WTC11 (cell line): ENCODE measurements at regions of chr19 and their contacts with region 1.

Region 1: DNA sequence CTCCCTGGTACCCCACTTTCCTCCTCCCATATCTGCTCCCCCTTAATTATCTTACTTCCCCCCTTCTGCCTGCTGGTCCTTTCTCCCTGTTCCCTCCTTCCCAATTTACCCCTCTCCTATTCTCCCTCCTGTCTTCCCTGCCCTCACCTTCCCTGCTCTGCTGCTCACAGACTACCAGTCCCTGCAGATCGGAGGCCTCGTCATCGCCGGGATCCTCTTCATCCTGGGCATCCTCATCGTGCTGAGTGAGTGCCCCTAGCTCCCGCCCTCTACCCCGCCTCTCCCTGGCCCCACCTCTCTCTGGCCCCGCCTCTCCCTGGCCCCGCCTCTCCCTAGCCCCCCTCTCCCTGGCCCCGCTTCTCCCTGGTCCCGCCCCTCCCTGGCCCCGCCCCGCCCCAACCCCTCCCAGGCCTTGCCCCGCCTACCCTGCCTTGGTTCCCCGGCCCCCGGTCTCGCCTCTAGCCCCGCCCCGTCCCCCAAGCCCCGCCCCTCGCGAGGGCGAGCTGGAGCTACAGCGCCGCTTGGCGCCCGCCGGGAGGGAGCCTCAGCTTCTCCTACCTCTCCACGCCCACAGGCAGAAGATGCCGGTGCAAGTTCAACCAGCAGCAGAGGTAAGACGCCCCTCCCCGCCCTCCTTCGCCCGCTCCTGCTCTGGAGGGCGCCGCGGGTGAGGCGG is 2.0 kb upstream of the FXYD7 start:
- DNase-seq: peak; percentile 98
- ATAC-seq: peak; percentile 77
- H3K4me3 Mint-ChIP-seq: peak overlapping the region; percentile 91
- H3K27ac Mint-ChIP-seq: 0 out of 2 replicates have a peak overlapping the region, but pooled peaks have one; percentile 86
- H3K4me1 Mint-ChIP-seq: peaks cover 44% of the 10 kb centered on the region
- H3K27me3 Mint-ChIP-seq: peaks cover 34% of the 10 kb centered on the region
- CTCF ChIP-seq: no peak

Region 2: DNA sequence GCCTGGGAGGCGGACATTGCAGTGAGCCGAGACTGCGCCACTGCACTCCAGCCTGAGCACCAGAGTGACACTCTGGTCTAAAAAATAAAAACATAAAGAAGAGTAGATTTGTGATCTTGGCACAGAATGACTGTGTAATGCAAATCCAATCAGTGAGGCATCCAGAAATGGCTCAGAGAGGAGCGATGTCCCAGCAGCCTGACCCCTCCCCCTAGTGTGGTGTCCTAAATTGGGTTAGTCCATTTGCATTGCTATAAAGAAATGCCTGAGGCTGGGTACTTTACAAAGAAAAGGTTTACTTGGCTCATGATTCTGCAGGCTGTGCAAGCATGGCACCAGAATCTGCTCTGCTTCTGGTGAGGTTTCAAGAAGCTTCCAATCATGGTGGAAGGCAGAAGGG is 273.5 kb before region 1 on chr19:
- CTCF ChIA-PET with region 1: no interaction called
- POLR2A ChIA-PET with region 1: no interaction called
- DNase-seq: no peak
- ATAC-seq: no peak
- H3K4me3 Mint-ChIP-seq: no peak overlapping the region
- H3K27ac Mint-ChIP-seq: no peak overlapping the region
- H3K4me1 Mint-ChIP-seq: peaks cover 12% of the 10 kb centered on the region
- H3K27me3 Mint-ChIP-seq: peaks cover 5% of the 10 kb centered on the region; the same call in 1 of the 2 replicates
- CTCF ChIP-seq: no peak

Region 3: DNA sequence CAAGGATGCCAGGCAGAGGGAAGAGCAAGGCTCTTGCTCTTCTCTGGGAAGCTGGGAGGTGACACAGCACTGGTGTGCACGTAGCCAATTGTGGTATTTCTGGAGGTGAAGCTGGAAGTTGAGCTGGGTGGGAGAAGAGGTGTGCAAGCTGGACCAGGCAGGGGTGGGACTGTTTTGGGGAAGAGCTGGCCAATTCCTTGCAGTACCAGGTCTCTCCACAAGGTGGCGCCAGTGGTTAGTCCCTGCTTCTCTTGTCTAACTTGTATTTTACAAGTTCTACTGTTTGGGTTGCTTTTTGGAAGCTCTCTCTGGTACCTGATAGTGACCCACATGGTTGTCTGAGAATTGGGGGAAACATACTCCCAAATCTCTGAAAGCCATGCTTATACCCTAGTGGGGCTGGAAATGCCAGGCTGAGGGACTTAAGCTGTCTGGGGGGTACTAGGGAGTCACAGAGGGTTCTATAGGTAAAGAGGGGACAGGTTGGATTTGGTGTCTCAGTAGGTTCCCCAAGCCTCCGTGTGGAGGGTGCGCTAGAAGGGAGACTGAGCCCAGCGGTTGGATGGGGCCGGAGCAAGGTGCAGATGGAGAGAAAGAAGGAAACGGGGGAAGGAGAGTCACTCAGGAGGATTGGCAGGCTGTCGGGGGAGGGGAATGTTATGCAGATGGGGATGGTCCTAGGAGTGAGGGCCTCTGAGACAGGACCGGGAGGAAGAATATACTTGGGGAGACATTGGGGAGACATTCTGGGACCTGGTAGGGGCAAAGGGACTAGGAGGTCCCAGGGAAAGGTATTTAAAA is 96.6 kb before region 1 on chr19:
- CTCF ChIA-PET with region 1: interaction called, 40 read pairs
- POLR2A ChIA-PET with region 1: no interaction called
- DNase-seq: peak; percentile 83
- ATAC-seq: no peak
- H3K4me3 Mint-ChIP-seq: no peak overlapping the region; the same call in 1 of the 2 replicates
- H3K27ac Mint-ChIP-seq: peak overlapping the region; percentile 15; the same call in 1 of the 2 replicates
- H3K4me1 Mint-ChIP-seq: peaks cover 50% of the 10 kb centered on the region
- H3K27me3 Mint-ChIP-seq: no peaks in the 10 kb centered on the region
- CTCF ChIP-seq: peak; percentile 99

Region 4: GRCh38 chr19:35066691-35067563 is 74.2 kb before region 1 on chr19:
- CTCF ChIA-PET with region 1: interaction called, 118 read pairs
- POLR2A ChIA-PET with region 1: interaction called, 5 read pairs
- DNase-seq: peak; percentile 99
- ATAC-seq: peak; percentile 80
- H3K4me3 Mint-ChIP-seq: peak overlapping the region; percentile 29
- H3K27ac Mint-ChIP-seq: peak overlapping the region; percentile 100
- H3K4me1 Mint-ChIP-seq: peaks cover 26% of the 10 kb centered on the region
- H3K27me3 Mint-ChIP-seq: peaks cover 32% of the 10 kb centered on the region
- CTCF ChIP-seq: peak; percentile 92

Region 5: GRCh38 chr19:35109395-35110112 is 31.5 kb before region 1 on chr19:
- CTCF ChIA-PET with region 1: interaction called, 61 read pairs
- POLR2A ChIA-PET with region 1: interaction called, 3 read pairs
- DNase-seq: no peak
- ATAC-seq: no peak
- H3K4me3 Mint-ChIP-seq: no peak overlapping the region
- H3K27ac Mint-ChIP-seq: no peak overlapping the region
- H3K4me1 Mint-ChIP-seq: peaks cover 25% of the 10 kb centered on the region
- H3K27me3 Mint-ChIP-seq: no peaks in the 10 kb centered on the region
- CTCF ChIP-seq: no peak

Region 6: GRCh38 chr19:35124098-35125060 is 16.7 kb before region 1 on chr19:
- CTCF ChIA-PET with region 1: interaction called, 26 read pairs
- POLR2A ChIA-PET with region 1: interaction called, 3 read pairs
- DNase-seq: peak; percentile 75
- ATAC-seq: peak; percentile 63
- H3K4me3 Mint-ChIP-seq: peak overlapping the region; percentile 40
- H3K27ac Mint-ChIP-seq: peak overlapping the region; percentile 41; the same call in 1 of the 2 replicates
- H3K4me1 Mint-ChIP-seq: peaks cover 31% of the 10 kb centered on the region
- H3K27me3 Mint-ChIP-seq: peaks cover 4% of the 10 kb centered on the region
- CTCF ChIP-seq: no peak

Region 7: DNA sequence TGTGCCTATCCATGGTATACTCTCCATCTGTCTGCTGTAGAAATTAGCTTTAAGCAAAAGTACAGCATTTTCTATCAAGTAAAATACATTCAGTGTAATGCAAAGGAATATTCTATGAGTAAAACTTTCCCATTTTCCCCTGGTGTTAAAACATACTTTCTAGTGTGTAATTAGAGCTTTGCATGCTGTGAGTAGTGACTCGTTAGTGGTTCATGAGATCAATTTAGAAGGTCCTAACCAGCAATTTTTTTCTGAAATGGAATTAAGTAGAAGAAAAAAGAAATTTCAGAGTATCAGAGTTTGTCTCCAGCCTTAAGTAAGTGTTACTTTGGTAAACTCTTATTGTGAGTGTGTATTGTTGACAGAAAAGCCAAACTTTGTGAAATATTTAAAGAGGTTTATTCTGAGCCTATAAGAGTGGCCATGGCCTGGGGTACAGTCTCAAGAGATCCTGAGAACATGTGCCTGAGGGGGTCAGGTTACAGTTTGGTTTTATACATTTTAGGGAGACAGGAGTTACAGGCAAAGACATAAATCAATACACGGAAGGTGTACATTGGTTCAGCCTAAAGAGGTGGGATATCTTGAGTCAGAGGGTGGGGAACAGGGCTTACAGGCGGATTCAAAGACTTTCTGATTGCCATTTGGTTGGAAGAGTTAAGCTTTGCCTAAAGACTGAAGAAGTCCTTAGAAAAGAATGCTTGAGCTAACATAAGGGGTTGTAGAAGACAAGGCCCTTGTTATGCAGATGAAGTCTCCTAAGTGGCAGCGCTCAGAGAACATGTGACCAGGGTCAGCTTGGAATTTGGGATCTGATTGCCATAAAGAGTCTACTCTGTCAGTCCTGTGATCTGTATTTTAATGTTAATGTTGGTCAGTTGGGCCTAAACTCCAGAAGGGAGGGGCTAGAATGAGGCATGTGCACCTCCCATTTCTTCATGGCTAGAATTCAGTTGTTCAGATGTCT is 61.9 kb after region 1 on chr19:
- CTCF ChIA-PET with region 1: interaction called, 16 read pairs
- POLR2A ChIA-PET with region 1: interaction called, 3 read pairs
- DNase-seq: peak; percentile 54
- ATAC-seq: peak; percentile 91
- H3K4me3 Mint-ChIP-seq: peak overlapping the region; percentile 16
- H3K27ac Mint-ChIP-seq: peak overlapping the region; percentile 98
- H3K4me1 Mint-ChIP-seq: peaks cover 69% of the 10 kb centered on the region
- H3K27me3 Mint-ChIP-seq: peaks cover 10% of the 10 kb centered on the region
- CTCF ChIP-seq: no peak

Region 8: DNA sequence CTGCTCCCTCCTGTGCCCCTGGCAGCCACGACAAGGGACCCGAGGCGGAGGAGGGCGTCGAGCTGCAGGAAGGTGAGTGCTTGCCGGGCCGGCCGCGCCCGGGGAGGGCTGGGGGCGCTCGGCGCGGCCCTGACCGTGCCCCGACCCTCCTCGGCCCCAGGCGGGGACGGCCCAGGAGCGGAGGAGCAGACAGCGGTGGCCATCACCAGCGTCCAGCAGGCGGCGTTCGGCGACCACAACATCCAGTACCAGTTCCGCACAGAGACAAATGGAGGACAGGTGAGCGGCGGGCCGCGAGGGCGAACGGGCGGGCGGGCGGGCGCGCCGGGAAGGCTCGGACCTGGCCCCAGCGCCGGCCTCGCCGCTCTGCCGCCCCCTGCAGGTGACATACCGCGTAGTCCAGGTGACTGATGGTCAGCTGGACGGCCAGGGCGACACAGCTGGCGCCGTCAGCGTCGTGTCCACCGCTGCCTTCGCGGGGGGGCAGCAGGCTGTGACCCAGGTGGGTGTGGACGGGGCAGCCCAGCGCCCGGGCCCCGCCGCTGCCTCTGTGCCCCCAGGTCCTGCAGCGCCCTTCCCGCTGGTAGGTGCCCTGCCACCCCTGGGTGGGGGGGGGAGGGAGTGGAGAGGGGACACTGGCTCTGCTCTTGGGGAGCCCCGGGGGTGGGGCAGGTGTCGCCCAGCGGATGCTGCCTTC is 128.5 kb after region 1 on chr19:
- CTCF ChIA-PET with region 1: interaction called, 12 read pairs
- POLR2A ChIA-PET with region 1: interaction called, 3 read pairs
- DNase-seq: peak; percentile 93
- ATAC-seq: peak; percentile 73
- H3K4me3 Mint-ChIP-seq: peak overlapping the region; percentile 57
- H3K27ac Mint-ChIP-seq: peak overlapping the region; percentile 15; the same call in 1 of the 2 replicates
- H3K4me1 Mint-ChIP-seq: peaks cover 7% of the 10 kb centered on the region
- H3K27me3 Mint-ChIP-seq: no peaks in the 10 kb centered on the region
- CTCF ChIP-seq: peak; percentile 97

Region 9: DNA sequence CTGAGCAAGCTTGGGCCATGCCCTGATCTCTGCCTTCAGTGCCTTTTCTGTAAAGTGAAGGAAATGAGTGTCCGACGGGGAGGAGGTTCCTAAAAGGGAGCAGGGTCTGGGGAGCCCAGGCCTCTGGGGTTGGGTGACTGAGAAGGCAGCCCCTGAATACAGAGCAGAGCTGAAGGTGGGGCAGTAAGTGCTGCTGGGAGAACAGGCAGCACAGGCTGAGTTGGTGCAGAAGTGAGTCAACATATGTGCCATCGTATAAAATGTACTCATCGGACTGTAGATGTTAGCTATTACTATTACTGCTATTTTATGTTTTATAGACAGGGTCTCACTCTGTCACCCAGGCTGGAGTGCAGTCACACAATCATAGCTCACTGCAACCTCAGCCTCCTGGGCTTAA is 140.2 kb after region 1 on chr19:
- CTCF ChIA-PET with region 1: no interaction called
- POLR2A ChIA-PET with region 1: no interaction called
- DNase-seq: no peak
- ATAC-seq: no peak
- H3K4me3 Mint-ChIP-seq: no peak overlapping the region
- H3K27ac Mint-ChIP-seq: peak overlapping the region; percentile 82; the same call in 1 of the 2 replicates
- H3K4me1 Mint-ChIP-seq: peaks cover 11% of the 10 kb centered on the region
- H3K27me3 Mint-ChIP-seq: no peaks in the 10 kb centered on the region; the same call in none of the 2 replicates
- CTCF ChIP-seq: no peak